ENCODE measurements at regions of chr3 and their contacts with region 1.

Region 1: DNA sequence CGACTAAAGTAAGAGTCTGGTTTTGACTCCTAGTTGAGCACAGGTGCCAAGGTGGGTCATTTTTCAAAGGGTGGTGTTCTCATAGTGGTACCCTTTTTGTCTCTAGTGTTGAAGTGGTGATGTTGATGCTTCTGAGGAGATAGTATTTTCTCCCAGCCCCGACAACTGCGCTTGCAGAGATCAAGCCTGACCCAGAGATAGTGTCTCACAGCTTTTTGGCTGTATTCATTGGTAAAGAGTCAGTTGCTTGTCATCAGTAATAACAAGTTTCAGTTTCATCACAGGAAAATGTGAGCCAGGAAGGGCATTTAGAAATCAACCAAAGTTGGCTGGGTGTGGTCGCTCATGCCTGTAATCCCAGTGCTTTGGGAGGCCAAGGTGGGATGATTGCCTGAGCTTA is 139.3 kb downstream of the NFKBIZ start:
- DNase-seq: no peak
- ATAC-seq: no peak
- H3K4me3 ChIP-seq: no peak overlapping the region
- H3K4me3 Mint-ChIP-seq: no peak overlapping the region
- H3K27ac ChIP-seq: no peak overlapping the region
- H3K27ac Mint-ChIP-seq: no peak overlapping the region
- H3K4me1 ChIP-seq: peaks cover 0 to 9% of the 10 kb centered on the region in 2 experiments
- H3K4me1 Mint-ChIP-seq: peaks cover 7 to 20% (median 16%) of the 10 kb centered on the region in 3 donors
- H3K27me3 ChIP-seq: no peaks in the 10 kb centered on the region
- H3K27me3 Mint-ChIP-seq: no peaks in the 10 kb centered on the region

Region 2: DNA sequence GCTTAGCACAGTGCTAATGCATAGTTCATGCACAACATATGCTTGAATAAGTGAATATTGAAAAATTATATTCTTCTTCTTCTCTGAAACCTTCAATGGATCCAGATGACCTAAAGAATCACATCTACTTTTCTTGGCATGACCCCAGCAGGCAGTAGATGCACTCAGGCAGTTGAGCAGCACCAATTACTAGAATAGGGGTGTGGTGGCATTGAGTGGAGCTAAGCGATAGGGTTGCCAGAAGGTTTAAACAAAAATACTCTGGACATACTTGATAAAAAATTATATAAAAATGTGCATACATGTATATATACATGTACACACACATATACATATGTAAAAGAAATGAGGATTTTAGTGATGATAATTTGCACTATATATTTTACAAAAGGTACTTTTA is 57.5 kb before region 1 on chr3:
- CTCF ChIA-PET with region 1: no interaction called
- POLR2A ChIA-PET with region 1: interaction called in 1 of 2 experiments, 12 read pairs
- DNase-seq: no peak
- ATAC-seq: no peak
- H3K4me3 ChIP-seq: no peak overlapping the region
- H3K4me3 Mint-ChIP-seq: no peak overlapping the region
- H3K27ac ChIP-seq: no peak overlapping the region
- H3K27ac Mint-ChIP-seq: no peak overlapping the region
- H3K4me1 ChIP-seq: peaks cover under 1 to 2% of the 10 kb centered on the region in 2 experiments
- H3K4me1 Mint-ChIP-seq: peaks cover 15 to 17% (median 17%) of the 10 kb centered on the region in 3 donors
- H3K27me3 ChIP-seq: no peaks in the 10 kb centered on the region
- H3K27me3 Mint-ChIP-seq: no peaks in the 10 kb centered on the region

Measured in T-cell (primary cell).